Caco-2 (cell line): ENCODE measurements at regions of chr6 and their contacts with region 1.

Region 1: DNA sequence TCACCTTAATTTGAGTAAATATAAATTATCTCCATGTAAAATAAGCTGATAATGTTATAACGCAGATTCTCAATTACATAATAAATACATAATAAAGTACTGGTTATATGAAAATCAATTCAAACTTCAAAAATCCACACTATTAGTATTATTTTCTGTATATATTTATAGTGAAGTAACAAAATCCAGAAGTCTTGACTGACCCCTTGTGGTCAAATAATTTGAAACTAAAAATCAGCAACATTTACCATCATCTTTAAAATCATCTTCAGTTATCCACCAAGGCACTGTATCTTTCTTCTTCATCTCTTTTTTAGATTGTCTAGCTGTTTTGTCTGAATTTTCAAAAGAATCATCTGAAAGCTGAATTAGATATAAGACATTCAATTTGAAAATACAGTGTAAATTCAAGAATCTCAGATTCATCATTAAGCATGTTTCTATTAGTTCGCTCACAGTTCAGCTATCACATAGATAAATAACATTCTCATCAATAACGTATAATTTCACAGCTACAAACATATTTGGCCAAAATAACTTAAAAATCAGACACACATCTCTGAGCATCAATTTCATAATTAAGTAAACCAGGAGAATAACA is 6.5 kb downstream of the CEP162 start:
- DNase-seq: no peak
- H3K4me3 ChIP-seq: no peak overlapping the region
- H3K4me3 Mint-ChIP-seq: no peak overlapping the region
- H3K27ac Mint-ChIP-seq: no peak overlapping the region
- H3K4me1 ChIP-seq: no peaks in the 10 kb centered on the region
- H3K4me1 Mint-ChIP-seq: no peaks in the 10 kb centered on the region
- H3K27me3 ChIP-seq: no peaks in the 10 kb centered on the region
- H3K27me3 Mint-ChIP-seq: no peaks in the 10 kb centered on the region
- CTCF ChIP-seq: peak; percentile 35 to 56

Region 2: DNA sequence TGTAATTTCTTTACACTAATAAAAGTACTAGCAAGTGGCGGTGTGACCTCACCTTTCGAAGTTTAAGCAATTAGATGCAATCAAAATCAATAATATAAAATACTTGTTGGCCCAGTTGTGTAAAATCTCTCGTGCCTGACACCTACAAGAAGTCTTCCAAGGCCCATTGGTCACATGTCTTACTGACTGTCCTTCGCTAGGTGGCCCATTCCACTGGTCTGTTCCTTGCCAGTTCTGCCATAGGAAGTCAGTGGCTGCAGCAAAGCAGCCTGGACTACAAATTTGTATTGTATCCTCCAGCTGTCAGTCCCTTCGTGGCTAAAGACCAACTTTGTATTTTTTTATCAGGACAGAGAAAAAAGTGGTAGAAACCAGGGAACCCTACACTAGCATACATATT is 299.6 kb before region 1 on chr6:
- CTCF ChIA-PET with region 1: no interaction called
- POLR2A ChIA-PET with region 1: no interaction called
- intact Hi-C with region 1: loop called (anchors 1 kb)
- DNase-seq: peak in 1 of 2 experiments; percentile 7
- H3K4me3 ChIP-seq: no peak overlapping the region
- H3K4me3 Mint-ChIP-seq: no peak overlapping the region
- H3K27ac Mint-ChIP-seq: no peak overlapping the region
- H3K4me1 ChIP-seq: no peaks in the 10 kb centered on the region
- H3K4me1 Mint-ChIP-seq: no peaks in the 10 kb centered on the region
- H3K27me3 ChIP-seq: no peaks in the 10 kb centered on the region
- H3K27me3 Mint-ChIP-seq: no peaks in the 10 kb centered on the region
- CTCF ChIP-seq: peak in 1 of 2 experiments; percentile 14

Region 3: GRCh38 chr6:84243240-84243639 is 22.3 kb after region 1 on chr6:
- CTCF ChIA-PET with region 1: no interaction called
- POLR2A ChIA-PET with region 1: no interaction called
- intact Hi-C with region 1: no loop called
- DNase-seq: no peak
- H3K4me3 ChIP-seq: no peak overlapping the region
- H3K4me3 Mint-ChIP-seq: no peak overlapping the region
- H3K27ac Mint-ChIP-seq: no peak overlapping the region
- H3K4me1 ChIP-seq: no peaks in the 10 kb centered on the region
- H3K4me1 Mint-ChIP-seq: no peaks in the 10 kb centered on the region
- H3K27me3 ChIP-seq: no peaks in the 10 kb centered on the region
- H3K27me3 Mint-ChIP-seq: no peaks in the 10 kb centered on the region
- CTCF ChIP-seq: peak in 1 of 2 experiments; percentile 29